Esophagus squamous epithelium (tissue), 5 donors: ENCODE measurements at regions of chr21 and their contacts with region 1.

Region 1: GRCh38 chr21:15826147-15826780 is 96.5 kb downstream of the USP25 start:
- DNase-seq: no peak
- H3K4me3 ChIP-seq: no peak overlapping the region
- H3K27ac ChIP-seq: no peak overlapping the region
- H3K4me1 ChIP-seq: no peaks in the 10 kb centered on the region
- H3K27me3 ChIP-seq: no peaks in the 10 kb centered on the region
- CTCF ChIP-seq: peak in 5 of 6 experiments; percentile 46 to 67 (median 56)
- POLR2A ChIP-seq: no peak

Region 2: DNA sequence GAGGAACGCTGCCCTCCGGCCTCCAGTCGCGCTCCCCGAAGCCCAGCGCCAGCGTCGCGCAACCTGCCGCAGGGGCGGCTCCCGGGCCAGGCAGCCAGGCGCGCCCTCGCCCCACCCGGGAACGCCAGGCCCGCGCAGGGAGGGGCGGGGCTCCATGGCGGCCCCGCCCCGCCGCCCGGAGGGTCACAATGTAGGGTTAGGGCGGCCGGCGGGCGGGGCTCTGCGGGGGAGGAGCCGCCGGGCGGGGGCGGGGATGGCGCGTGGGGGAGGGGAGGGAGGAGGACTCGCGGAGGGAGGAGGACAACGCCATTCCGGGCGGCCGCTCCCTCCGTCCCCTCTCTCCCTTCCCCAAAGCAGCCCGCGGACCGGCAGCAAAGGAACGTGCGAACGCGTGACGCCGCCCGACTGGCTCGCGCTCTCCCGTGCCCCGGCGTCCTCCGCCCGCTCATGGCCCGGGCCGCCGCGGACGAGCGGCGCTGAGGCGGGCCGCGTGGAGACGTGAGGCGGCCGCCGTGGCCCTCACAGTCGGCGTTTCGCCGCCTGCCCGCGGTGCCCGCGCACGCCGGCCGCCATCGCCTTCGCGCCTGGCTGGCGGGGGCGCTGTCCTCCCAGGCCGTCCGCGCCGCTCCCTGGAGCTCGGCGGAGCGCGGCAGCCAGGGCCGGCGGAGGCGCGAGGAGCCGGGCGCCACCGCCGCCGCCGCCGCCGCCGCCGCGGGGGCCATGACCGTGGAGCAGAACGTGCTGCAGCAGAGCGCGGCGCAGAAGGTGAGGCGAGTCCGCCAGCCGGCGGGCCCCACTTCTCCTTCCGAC is 96.4 kb before region 1 on chr21 and contains the start of gene USP25:
- intact Hi-C with region 1: loop called (anchors 10 kb)
- DNase-seq: peak; percentile 72
- H3K4me3 ChIP-seq: peak within 1 kb of the TSS; percentile 72 to 92 (median 75)
- H3K27ac ChIP-seq: peak within 1 kb of the TSS; percentile 90 to 99 (median 96)
- H3K4me1 ChIP-seq: peaks cover 4 to 47% (median 12%) of the 10 kb centered on the region in 3 donors
- H3K27me3 ChIP-seq: no peaks in the 10 kb centered on the region
- CTCF ChIP-seq: peak in 4 of 6 experiments; percentile 8 to 24 (median 14)
- POLR2A ChIP-seq: peak in 3 of 4 donors; percentile 22 to 92 (median 83)
- total RNA-seq, gene USP25: 17.4 to 42.0 (median 27.5) TPM

Region 3: GRCh38 chr21:15856813-15857212 is 30.5 kb after region 1 on chr21:
- intact Hi-C with region 1: no loop called
- DNase-seq: no peak
- H3K4me3 ChIP-seq: no peak overlapping the region
- H3K27ac ChIP-seq: no peak overlapping the region
- H3K4me1 ChIP-seq: no peaks in the 10 kb centered on the region
- H3K27me3 ChIP-seq: no peaks in the 10 kb centered on the region
- CTCF ChIP-seq: no peak
- POLR2A ChIP-seq: no peak

Region 4: GRCh38 chr21:15870819-15871218 is 44.6 kb after region 1 on chr21:
- intact Hi-C with region 1: no loop called
- DNase-seq: no peak
- H3K4me3 ChIP-seq: no peak overlapping the region
- H3K27ac ChIP-seq: no peak overlapping the region
- H3K4me1 ChIP-seq: no peaks in the 10 kb centered on the region
- H3K27me3 ChIP-seq: no peaks in the 10 kb centered on the region
- CTCF ChIP-seq: no peak
- POLR2A ChIP-seq: no peak